CD14-positive monocyte (primary cell): ENCODE measurements at regions of chr5 and their contacts with region 1.

Region 1: GRCh38 chr5:43110606-43111442 is 9.9 kb upstream of the ZNF131 start:
- DNase-seq: no peak
- H3K4me3 ChIP-seq: no peak overlapping the region
- H3K4me3 Mint-ChIP-seq: no peak overlapping the region
- H3K27ac ChIP-seq: no peak overlapping the region
- H3K27ac Mint-ChIP-seq: no peak overlapping the region
- H3K4me1 ChIP-seq: peaks cover 0 to 2% of the 10 kb centered on the region in 2 donors
- H3K4me1 Mint-ChIP-seq: peaks cover under 1% of the 10 kb centered on the region
- H3K27me3 ChIP-seq: no peaks in the 10 kb centered on the region
- H3K27me3 Mint-ChIP-seq: peaks cover 0 to 6% (median 1%) of the 10 kb centered on the region in 3 donors
- CTCF ChIP-seq: peak; percentile 35

Region 2: GRCh38 chr5:43389679-43390329 is 279.0 kb after region 1 on chr5:
- intact Hi-C with region 1: loop called in 1 of 2 experiments (anchors 10 kb)
- DNase-seq: peak; percentile 75 to 86 (median 81)
- H3K4me3 ChIP-seq: no peak overlapping the region
- H3K4me3 Mint-ChIP-seq: no peak overlapping the region
- H3K27ac ChIP-seq: no peak overlapping the region
- H3K27ac Mint-ChIP-seq: peak overlapping the region in 1 of 7 donors; percentile 37
- H3K4me1 ChIP-seq: no peaks in the 10 kb centered on the region
- H3K4me1 Mint-ChIP-seq: peaks cover 7% of the 10 kb centered on the region
- H3K27me3 ChIP-seq: no peaks in the 10 kb centered on the region
- H3K27me3 Mint-ChIP-seq: no peaks in the 10 kb centered on the region
- CTCF ChIP-seq: peak; percentile 87